ENCODE measurements at regions of chr2 and their contacts with region 1.

Region 1: DNA sequence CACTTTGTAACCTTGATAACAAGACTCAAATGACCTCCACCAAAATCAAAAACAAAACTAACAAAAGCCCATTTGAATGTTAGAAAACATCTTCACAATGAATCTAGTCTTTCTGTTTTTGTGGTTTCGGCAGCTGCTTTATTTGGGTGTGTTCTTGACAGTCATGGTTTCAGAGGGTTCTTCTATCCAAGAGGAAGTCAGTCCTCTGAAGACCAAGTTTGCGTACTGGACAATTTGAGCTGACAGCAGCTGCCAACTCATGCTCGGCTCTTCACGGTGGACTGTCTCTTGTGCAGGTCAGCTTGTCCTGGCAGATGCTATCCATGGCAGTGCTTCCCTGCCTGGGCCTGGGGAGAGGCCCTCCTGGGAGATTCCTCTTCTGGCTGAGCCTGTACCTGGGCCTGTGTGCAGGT is 91.0 kb downstream of the TMEM17 start:
- DNase-seq: no peak

Region 2: DNA sequence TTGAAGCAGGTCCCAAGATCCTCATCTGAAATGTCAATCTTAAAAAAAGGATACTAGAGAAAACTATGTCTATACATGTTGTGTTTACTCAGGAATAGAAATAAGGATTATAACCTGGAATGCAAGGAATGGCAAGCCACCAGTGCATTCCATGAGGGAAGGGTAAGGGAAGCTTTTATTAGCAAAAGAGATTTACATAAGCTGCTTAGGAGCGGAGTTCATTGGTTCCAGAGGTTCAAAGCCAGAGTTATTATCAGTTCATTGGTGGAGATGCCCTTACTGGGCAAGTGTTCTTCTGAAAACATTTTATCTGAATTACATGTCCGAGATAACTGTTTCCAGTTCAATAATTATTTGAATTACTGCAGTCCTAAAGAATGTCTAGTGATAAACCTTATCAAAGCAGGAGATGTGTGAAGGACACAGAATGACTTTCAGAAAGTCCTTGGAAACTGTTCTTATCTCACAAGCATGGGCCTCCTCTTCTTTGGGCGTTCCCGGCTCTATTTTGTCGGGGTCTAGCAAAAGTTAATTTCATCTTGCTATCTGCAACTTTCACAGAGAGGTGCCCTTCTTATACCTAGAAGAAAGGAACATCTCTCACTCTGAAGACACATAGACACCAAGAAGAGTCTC is 486.1 kb before region 1 on chr2:
- in situ Hi-C with region 1: loop called (anchors 10 kb)
- DNase-seq: peak; percentile 12